Mammary epithelial cell (primary cell): ENCODE measurements at regions of chr21 and their contacts with region 1.

Region 1: DNA sequence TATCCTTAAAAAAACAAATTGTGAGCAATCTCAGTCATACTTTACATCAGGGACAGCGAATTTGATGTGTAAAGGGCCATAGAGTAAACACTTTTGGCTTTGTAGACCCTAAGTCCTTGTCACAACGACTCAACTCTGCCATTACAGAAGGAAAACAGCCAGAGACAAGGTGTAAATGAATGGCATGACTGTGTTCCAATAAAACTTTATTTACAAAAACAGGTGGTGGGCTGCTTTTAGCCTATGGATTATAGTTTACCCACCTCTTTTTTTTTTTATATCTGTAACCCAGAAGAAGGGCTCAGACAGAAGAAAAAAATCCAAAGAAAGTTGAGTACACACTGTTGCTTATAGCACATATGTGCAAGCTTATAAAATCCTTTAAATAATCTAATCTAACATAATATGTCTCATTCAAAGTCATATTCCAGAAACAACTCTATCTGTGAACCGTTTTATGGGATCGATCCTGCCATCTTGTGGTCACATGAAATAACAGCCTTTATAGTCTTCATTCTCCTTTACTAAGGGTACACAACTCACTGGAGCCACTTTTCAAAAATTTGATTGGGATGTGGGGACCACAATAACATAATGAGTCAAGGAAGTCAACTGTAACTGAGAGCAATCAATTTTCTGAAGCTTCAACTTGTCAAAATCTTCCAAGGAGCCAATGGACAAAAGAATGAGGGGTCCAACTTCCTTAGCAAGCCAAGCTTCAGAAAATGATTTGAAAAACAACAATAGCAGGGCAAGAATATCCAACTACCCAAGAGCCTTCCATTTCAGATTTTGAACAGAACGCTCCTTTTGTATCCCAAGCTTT is 142.2 kb upstream of the KRTAP19-8 start:
- DNase-seq: peak; percentile 22
- H3K4me3 ChIP-seq: no peak overlapping the region
- H3K27ac ChIP-seq: no peak overlapping the region
- H3K4me1 ChIP-seq: no peaks in the 10 kb centered on the region
- H3K27me3 ChIP-seq: no peaks in the 10 kb centered on the region
- CTCF ChIP-seq: peak; percentile 58

Region 2: GRCh38 chr21:31098576-31099005 is 81.9 kb before region 1 on chr21:
- CTCF ChIA-PET with region 1: no interaction called
- dilution Hi-C with region 1: no loop called
- in situ Hi-C with region 1: loop called in 1 of 2 experiments (anchors 5 kb)
- intact Hi-C with region 1: loop called (anchors 1 kb)
- DNase-seq: peak; percentile 24
- H3K4me3 ChIP-seq: no peak overlapping the region
- H3K27ac ChIP-seq: no peak overlapping the region
- H3K4me1 ChIP-seq: no peaks in the 10 kb centered on the region
- H3K27me3 ChIP-seq: no peaks in the 10 kb centered on the region
- CTCF ChIP-seq: peak; percentile 89 to 91

Region 3: GRCh38 chr21:31107871-31108270 is 72.6 kb before region 1 on chr21:
- CTCF ChIA-PET with region 1: no interaction called
- dilution Hi-C with region 1: no loop called
- in situ Hi-C with region 1: loop called (anchors 5 to 10 kb)
- intact Hi-C with region 1: loop called (anchors 1 kb)
- DNase-seq: no peak
- H3K4me3 ChIP-seq: no peak overlapping the region
- H3K27ac ChIP-seq: no peak overlapping the region
- H3K4me1 ChIP-seq: no peaks in the 10 kb centered on the region
- H3K27me3 ChIP-seq: peaks cover 3% of the 10 kb centered on the region
- CTCF ChIP-seq: no peak

Region 4: DNA sequence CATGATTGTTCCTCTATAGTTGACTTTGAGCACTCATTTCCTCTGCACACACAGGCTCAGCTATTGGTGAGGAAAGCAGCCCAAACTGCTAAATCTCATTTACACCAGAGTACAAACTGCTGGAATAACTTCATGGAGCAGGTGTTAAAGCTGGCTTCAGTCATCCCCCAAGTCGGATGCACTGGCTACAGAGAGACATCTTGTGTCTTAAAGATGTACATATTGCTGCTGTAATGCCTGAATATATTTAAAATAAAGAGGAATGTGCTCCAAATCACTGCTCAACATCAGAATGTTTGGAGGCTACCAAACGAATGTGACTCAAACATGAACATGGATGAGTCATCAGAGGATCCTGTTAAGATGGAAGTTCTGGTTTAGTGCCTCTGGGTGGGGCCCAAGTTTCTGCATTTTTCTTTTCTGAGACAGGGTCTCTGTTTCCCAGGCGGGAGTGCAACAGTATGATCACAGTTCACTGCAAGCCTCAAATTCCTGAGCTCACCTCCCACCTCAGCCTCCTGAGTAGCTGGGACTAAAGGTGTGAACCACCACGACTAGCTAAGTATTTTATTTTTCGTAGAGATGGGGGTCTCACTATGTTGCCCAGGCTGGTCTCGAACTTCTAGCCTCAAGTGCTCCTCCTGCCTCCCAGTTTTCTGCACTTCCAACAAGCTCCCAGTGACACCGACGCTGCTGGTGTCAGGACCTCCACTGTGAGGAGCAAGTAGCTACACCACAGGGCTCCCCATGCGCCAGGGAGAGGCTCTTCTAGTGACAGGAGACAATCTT is 63.1 kb before region 1 on chr21:
- CTCF ChIA-PET with region 1: no interaction called
- dilution Hi-C with region 1: no loop called
- in situ Hi-C with region 1: loop called in 1 of 2 experiments (anchors 10 kb)
- intact Hi-C with region 1: no loop called
- DNase-seq: peak; percentile 73
- H3K4me3 ChIP-seq: no peak overlapping the region
- H3K27ac ChIP-seq: no peak overlapping the region
- H3K4me1 ChIP-seq: peaks cover 12% of the 10 kb centered on the region
- H3K27me3 ChIP-seq: no peaks in the 10 kb centered on the region
- CTCF ChIP-seq: peak in 1 of 2 donors; percentile 15

Region 5: GRCh38 chr21:31282095-31282709 is 101.7 kb after region 1 on chr21:
- CTCF ChIA-PET with region 1: no interaction called
- dilution Hi-C with region 1: no loop called
- in situ Hi-C with region 1: no loop called
- intact Hi-C with region 1: no loop called
- DNase-seq: peak; percentile 34
- H3K4me3 ChIP-seq: no peak overlapping the region
- H3K27ac ChIP-seq: no peak overlapping the region
- H3K4me1 ChIP-seq: peaks cover 4% of the 10 kb centered on the region
- H3K27me3 ChIP-seq: no peaks in the 10 kb centered on the region
- CTCF ChIP-seq: no peak

Region 6: GRCh38 chr21:31326522-31327242 is 146.2 kb after region 1 on chr21:
- CTCF ChIA-PET with region 1: no interaction called
- dilution Hi-C with region 1: no loop called
- in situ Hi-C with region 1: no loop called
- intact Hi-C with region 1: no loop called
- DNase-seq: no peak
- H3K4me3 ChIP-seq: no peak overlapping the region
- H3K27ac ChIP-seq: no peak overlapping the region
- H3K4me1 ChIP-seq: no peaks in the 10 kb centered on the region
- H3K27me3 ChIP-seq: no peaks in the 10 kb centered on the region
- CTCF ChIP-seq: no peak